Right lobe of liver (tissue), 6 donors: ENCODE measurements at regions of chr3 and their contacts with region 1.

Region 1: GRCh38 chr3:31132132-31132769 is 237.8 kb upstream of the GADL1 start:
- DNase-seq: no peak
- ATAC-seq: peak; percentile 73 to 83 (median 78)
- H3K4me3 ChIP-seq: no peak overlapping the region
- H3K27ac ChIP-seq: no peak overlapping the region
- H3K4me1 ChIP-seq: no peaks in the 10 kb centered on the region
- H3K27me3 ChIP-seq: no peaks in the 10 kb centered on the region
- CTCF ChIP-seq: peak; percentile 56 to 71 (median 64)
- POLR2A ChIP-seq: no peak

Region 2: DNA sequence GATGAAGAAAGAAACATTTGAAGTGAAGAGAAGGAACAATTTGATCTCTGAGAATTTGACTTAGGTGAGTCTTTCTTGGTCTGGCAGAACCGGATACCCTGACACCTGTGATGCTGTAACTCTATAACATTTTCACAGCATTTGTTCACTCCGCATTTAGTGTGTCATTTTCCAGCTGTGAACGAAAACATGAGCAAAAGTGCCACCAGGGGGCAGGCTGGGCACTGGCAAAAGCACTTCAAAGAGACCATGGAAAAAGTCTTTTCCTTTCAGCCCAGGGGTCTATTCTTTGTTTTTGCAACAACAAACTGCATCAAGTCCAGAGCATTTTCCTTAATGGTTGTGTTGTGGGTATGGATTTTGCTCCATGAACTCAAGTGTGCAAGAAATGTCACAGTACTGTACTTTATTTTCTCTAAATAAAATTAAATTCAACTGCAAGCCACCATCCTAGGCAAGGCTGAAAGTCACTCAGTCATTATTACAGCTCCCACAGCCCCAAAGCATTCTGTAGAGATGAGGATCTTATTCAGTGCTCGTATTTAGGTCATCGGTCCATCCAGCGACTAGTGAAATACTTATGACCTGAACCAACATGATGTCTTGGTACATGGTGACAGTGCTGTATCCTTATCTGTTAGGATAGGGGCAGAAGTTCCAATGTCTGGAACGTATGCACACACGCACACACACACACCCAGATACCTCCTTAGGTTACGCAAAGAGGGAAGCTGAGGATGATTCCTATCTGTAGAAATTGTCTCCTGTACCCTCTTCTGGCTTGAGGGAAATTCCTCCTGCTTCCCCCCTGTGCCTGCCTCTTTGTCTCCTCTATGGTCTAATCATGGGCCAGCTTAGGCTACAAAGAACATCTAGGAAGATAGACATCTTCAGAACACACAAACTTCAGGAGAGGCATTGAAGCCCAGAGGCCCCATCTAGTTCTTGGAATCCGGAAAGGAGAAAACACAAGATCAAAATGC is 363.3 kb before region 1 on chr3:
- intact Hi-C with region 1: loop called in 1 of 2 experiments (anchors 10 kb)
- DNase-seq: peak; percentile 60 to 69 (median 67)
- ATAC-seq: peak; percentile 57 to 77 (median 75)
- H3K4me3 ChIP-seq: no peak overlapping the region
- H3K27ac ChIP-seq: no peak overlapping the region
- H3K4me1 ChIP-seq: no peaks in the 10 kb centered on the region
- H3K27me3 ChIP-seq: no peaks in the 10 kb centered on the region
- CTCF ChIP-seq: peak; percentile 77 to 86 (median 84)
- POLR2A ChIP-seq: no peak

Region 3: DNA sequence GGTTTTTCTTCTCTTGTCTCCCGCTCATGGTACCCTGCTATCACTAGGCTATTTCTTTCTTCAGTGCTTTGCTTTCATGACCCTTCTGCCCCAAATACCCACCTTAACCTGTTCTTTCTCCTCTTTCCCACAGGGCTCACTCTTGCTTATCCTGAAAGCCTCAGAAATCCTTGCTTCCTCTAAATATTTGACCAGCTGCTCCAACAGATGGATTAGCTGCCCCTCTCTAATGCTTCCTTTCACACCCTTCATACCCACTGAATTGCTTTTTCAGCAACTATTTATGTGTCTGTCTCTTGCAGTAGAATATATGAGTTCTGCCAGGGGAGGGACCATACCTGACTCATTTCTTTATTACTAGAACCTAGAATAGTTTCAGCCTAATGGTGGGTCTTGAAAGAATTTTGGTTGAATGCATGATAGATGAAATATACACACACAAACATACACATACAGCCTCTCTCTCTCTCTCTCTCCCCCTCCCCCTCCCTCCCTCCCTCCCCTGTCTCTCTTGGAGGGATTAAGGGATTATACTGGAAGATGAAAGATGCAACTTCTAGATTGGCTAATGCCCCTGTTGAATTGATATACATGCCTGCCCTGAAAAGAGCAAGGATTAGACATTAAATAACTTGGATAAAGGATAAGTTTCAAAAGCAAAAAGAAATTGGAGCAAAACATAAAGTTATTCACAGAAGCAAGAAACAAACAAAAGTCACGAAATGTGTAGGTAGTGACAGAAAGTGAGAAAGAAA is 142.8 kb before region 1 on chr3:
- intact Hi-C with region 1: no loop called
- DNase-seq: no peak
- ATAC-seq: no peak
- H3K4me3 ChIP-seq: no peak overlapping the region
- H3K27ac ChIP-seq: no peak overlapping the region
- H3K4me1 ChIP-seq: peaks cover 0 to 9% (median 0%) of the 10 kb centered on the region in 4 donors
- H3K27me3 ChIP-seq: no peaks in the 10 kb centered on the region
- CTCF ChIP-seq: no peak
- POLR2A ChIP-seq: no peak

Region 4: GRCh38 chr3:31010491-31010890 is 121.8 kb before region 1 on chr3:
- intact Hi-C with region 1: no loop called
- DNase-seq: no peak
- ATAC-seq: no peak
- H3K4me3 ChIP-seq: no peak overlapping the region
- H3K27ac ChIP-seq: no peak overlapping the region
- H3K4me1 ChIP-seq: no peaks in the 10 kb centered on the region
- H3K27me3 ChIP-seq: no peaks in the 10 kb centered on the region
- CTCF ChIP-seq: no peak
- POLR2A ChIP-seq: no peak